CD8-positive, alpha-beta T cell (primary cell): ENCODE measurements at regions of chr12 and their contacts with region 1.

Region 1: DNA sequence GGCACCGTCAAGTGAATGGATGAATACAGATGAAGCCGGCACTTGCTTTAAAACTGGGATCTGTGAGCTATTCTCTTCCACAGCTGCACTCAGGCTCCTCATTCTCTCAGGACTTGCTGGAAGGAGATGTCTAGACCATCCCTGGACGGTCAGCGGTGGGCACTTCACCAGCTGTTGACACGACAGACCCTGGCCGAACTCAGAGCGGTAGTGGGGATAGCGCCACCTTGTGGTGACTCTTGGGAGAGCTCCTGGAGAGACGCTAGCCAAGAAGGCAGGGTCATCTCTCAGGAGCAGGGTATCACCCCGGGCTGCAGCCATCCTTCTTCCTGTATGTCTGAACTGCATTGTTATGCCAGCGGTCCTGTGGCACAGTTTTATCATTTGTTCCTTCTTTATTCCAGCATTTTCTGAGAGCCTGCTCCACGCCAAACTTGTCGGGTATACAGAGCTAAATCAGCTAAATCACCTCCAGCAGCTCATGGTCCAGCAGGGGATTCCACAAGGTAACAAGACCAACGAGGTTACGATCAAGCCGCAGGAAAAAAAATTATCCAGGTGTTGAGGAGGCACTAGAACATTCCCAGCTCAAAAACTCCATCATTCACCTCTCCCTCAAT is 10.0 kb downstream of the WNT1 start:
- DNase-seq: peak in 8 of 9 experiments; percentile 58 to 84 (median 78)
- ATAC-seq: peak; percentile 84
- H3K4me3 ChIP-seq: no peak overlapping the region
- H3K4me3 Mint-ChIP-seq: no peak overlapping the region
- H3K27ac ChIP-seq: no peak overlapping the region
- H3K27ac Mint-ChIP-seq: no peak overlapping the region
- H3K4me1 ChIP-seq: no peaks in the 10 kb centered on the region
- H3K4me1 Mint-ChIP-seq: peaks cover 5% of the 10 kb centered on the region
- H3K27me3 ChIP-seq: peaks cover 0 to 7% of the 10 kb centered on the region in 2 experiments
- H3K27me3 Mint-ChIP-seq: peaks cover 24% of the 10 kb centered on the region
- CTCF ChIP-seq: peak; percentile 81

Region 2: DNA sequence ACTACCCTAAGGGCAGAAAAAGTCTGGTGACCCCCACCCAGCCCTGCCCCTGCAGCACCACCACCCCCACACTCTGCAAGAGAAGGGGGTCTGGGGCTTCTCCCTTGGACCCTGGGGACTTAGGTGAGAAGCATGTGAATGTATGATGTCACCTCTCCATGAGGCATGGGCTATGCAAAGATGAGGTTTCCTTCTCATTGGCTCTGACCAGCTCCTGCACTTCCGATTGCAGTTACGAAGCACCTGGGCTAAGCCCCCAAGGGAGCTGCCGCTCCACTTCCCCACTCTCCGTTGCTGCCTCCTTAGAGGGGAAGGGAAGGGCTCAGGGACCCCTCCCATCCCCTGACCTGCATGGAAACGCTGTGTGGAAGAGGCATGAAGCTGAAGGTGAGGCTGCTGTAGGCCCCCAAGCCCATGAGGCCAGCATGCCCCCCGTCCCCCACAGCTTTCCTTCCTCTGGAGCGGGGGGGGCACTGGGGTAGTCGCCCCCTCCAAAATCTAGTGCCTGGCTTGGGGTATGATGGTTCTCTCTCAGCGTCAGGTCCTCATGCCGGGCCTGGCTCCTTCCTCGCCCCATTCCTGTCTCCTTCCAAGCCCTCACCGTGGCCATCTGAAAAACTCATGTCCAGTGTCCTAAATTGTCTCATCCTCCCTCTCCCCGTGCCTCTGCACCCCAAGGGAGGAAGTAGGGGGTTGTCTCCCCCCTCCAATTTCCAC is 130.7 kb before region 1 on chr12:
- CTCF ChIA-PET with region 1: interaction called, 23 read pairs
- POLR2A ChIA-PET with region 1: interaction called, 3 read pairs
- intact Hi-C with region 1: no loop called
- DNase-seq: no peak
- ATAC-seq: no peak
- H3K4me3 ChIP-seq: no peak overlapping the region
- H3K4me3 Mint-ChIP-seq: no peak overlapping the region
- H3K27ac ChIP-seq: no peak overlapping the region
- H3K27ac Mint-ChIP-seq: no peak overlapping the region
- H3K4me1 ChIP-seq: peaks cover 7% of the 10 kb centered on the region
- H3K4me1 Mint-ChIP-seq: peaks cover 10% of the 10 kb centered on the region
- H3K27me3 ChIP-seq: peaks cover 3 to 7% of the 10 kb centered on the region in 2 experiments
- H3K27me3 Mint-ChIP-seq: peaks cover 18% of the 10 kb centered on the region
- CTCF ChIP-seq: no peak

Region 3: GRCh38 chr12:48903982-48904411 is 84.1 kb before region 1 on chr12:
- CTCF ChIA-PET with region 1: interaction called, 13 read pairs
- POLR2A ChIA-PET with region 1: no interaction called
- intact Hi-C with region 1: loop called (anchors 1 to 5 kb)
- DNase-seq: peak; percentile 68 to 93 (median 87)
- ATAC-seq: peak; percentile 99
- H3K4me3 ChIP-seq: peak overlapping the region; percentile 13 to 27
- H3K4me3 Mint-ChIP-seq: peak overlapping the region; percentile 79
- H3K27ac ChIP-seq: no peak overlapping the region
- H3K27ac Mint-ChIP-seq: no peak overlapping the region
- H3K4me1 ChIP-seq: peaks cover 4% of the 10 kb centered on the region
- H3K4me1 Mint-ChIP-seq: peaks cover 11% of the 10 kb centered on the region
- H3K27me3 ChIP-seq: no peaks in the 10 kb centered on the region
- H3K27me3 Mint-ChIP-seq: no peaks in the 10 kb centered on the region
- CTCF ChIP-seq: peak; percentile 79

Region 4: GRCh38 chr12:48924617-48925303 is 63.4 kb before region 1 on chr12:
- CTCF ChIA-PET with region 1: interaction called, 66 read pairs
- POLR2A ChIA-PET with region 1: no interaction called
- intact Hi-C with region 1: loop called (anchors 1 kb)
- DNase-seq: peak; percentile 65 to 90 (median 83)
- ATAC-seq: peak; percentile 69
- H3K4me3 ChIP-seq: peak overlapping the region; percentile 96 to 99
- H3K4me3 Mint-ChIP-seq: peak overlapping the region; percentile 97
- H3K27ac ChIP-seq: peak overlapping the region; percentile 94
- H3K27ac Mint-ChIP-seq: peak overlapping the region; percentile 97
- H3K4me1 ChIP-seq: peaks cover 24% of the 10 kb centered on the region
- H3K4me1 Mint-ChIP-seq: peaks cover 46% of the 10 kb centered on the region
- H3K27me3 ChIP-seq: no peaks in the 10 kb centered on the region
- H3K27me3 Mint-ChIP-seq: no peaks in the 10 kb centered on the region
- CTCF ChIP-seq: peak; percentile 78

Region 5: DNA sequence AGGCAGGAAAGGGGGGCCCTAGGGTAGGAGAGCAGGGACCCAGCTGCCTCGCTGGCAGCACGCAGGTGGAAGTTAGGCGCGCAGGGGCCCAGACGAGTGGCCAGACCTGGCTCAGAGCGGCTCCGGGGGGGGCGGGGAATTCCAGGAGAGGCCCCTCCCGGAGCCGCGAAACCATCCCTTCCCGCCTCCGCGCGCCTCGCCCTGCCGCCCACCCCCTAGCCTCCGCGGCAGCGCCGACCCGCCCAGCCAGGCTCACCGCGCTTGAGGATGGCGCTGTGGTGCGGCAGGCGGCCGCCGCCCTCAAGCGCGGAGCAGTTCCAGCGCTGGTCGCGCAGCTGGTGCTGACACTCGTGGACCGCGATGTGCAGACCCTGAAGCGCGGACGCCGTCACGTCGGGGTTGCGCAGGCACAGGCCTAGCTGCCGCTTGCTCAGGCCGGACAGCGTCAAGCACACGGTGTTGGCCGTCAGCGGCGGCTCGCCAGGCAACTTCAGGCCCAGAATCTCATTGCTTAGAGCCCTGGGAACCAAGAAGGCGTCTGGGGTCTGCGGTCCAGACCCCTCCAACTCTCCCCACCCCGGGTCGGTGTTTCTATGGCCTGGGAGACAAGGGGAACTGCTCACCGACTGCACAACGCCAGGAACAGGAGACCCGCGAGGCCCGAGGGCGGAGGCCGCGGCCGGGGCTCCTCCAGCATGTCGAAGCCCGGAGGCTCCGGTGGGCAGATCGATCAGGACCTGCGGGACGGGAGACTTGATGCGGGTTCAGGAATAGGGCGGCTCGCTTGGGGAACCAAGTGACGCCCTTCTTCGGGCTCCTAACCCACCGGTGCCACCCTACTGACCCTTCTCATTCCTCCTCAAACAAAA is 18.1 kb before region 1 on chr12:
- CTCF ChIA-PET with region 1: interaction called, 24 read pairs
- POLR2A ChIA-PET with region 1: no interaction called
- intact Hi-C with region 1: loop called (anchors 1 to 2 kb)
- DNase-seq: peak in 5 of 9 experiments; percentile 25 to 75 (median 62)
- ATAC-seq: peak; percentile 65
- H3K4me3 ChIP-seq: peak overlapping the region; percentile 6 to 21
- H3K4me3 Mint-ChIP-seq: peak overlapping the region; percentile 71
- H3K27ac ChIP-seq: no peak overlapping the region
- H3K27ac Mint-ChIP-seq: no peak overlapping the region
- H3K4me1 ChIP-seq: peaks cover 31% of the 10 kb centered on the region
- H3K4me1 Mint-ChIP-seq: peaks cover 21% of the 10 kb centered on the region
- H3K27me3 ChIP-seq: peaks cover 36 to 37% of the 10 kb centered on the region in 2 experiments
- H3K27me3 Mint-ChIP-seq: peaks cover 38% of the 10 kb centered on the region
- CTCF ChIP-seq: no peak

Region 6: GRCh38 chr12:48977315-48978281 is 10.5 kb before region 1 on chr12:
- CTCF ChIA-PET with region 1: interaction called, 54 read pairs
- POLR2A ChIA-PET with region 1: interaction called, 7 read pairs
- intact Hi-C with region 1: loop called (anchors 1 to 2 kb)
- DNase-seq: peak; percentile 59 to 92 (median 84)
- ATAC-seq: peak; percentile 55
- H3K4me3 ChIP-seq: peak overlapping the region; percentile 60 to 77
- H3K4me3 Mint-ChIP-seq: peak overlapping the region; percentile 63
- H3K27ac ChIP-seq: no peak overlapping the region
- H3K27ac Mint-ChIP-seq: peak overlapping the region; percentile 76
- H3K4me1 ChIP-seq: peaks cover 44% of the 10 kb centered on the region
- H3K4me1 Mint-ChIP-seq: peaks cover 46% of the 10 kb centered on the region
- H3K27me3 ChIP-seq: peaks cover 14% of the 10 kb centered on the region in 2 experiments
- H3K27me3 Mint-ChIP-seq: peaks cover 28% of the 10 kb centered on the region
- CTCF ChIP-seq: peak; percentile 92